ENCODE measurements at regions of chr12 and their contacts with region 1.

Region 1: GRCh38 chr12:67222302-67222701 is 46.9 kb upstream of the CAND1 start:
- DNase-seq: peak; percentile 45
- H3K4me3 ChIP-seq: no peak overlapping the region
- H3K27ac ChIP-seq: no peak overlapping the region
- H3K4me1 ChIP-seq: no peaks in the 10 kb centered on the region
- H3K27me3 ChIP-seq: peaks cover 2% of the 10 kb centered on the region
- CTCF ChIP-seq: peak; percentile 60 to 69

Region 2: GRCh38 chr12:66901138-66901932 is 321.0 kb before region 1 on chr12:
- CTCF ChIA-PET with region 1: no interaction called
- dilution Hi-C with region 1: no loop called
- in situ Hi-C with region 1: loop called (anchors 10 to 25 kb)
- intact Hi-C with region 1: loop called (anchors 2 kb)
- DNase-seq: peak; percentile 24
- H3K4me3 ChIP-seq: no peak overlapping the region
- H3K27ac ChIP-seq: no peak overlapping the region
- H3K4me1 ChIP-seq: peaks cover 8% of the 10 kb centered on the region
- H3K27me3 ChIP-seq: no peaks in the 10 kb centered on the region
- CTCF ChIP-seq: no peak

Region 3: GRCh38 chr12:67025543-67026114 is 196.7 kb before region 1 on chr12:
- CTCF ChIA-PET with region 1: interaction called, 4 read pairs
- dilution Hi-C with region 1: no loop called
- in situ Hi-C with region 1: loop called in 1 of 2 experiments (anchors 10 kb)
- intact Hi-C with region 1: loop called (anchors 1 kb)
- DNase-seq: peak; percentile 28
- H3K4me3 ChIP-seq: no peak overlapping the region
- H3K27ac ChIP-seq: no peak overlapping the region
- H3K4me1 ChIP-seq: no peaks in the 10 kb centered on the region
- H3K27me3 ChIP-seq: no peaks in the 10 kb centered on the region
- CTCF ChIP-seq: peak; percentile 77 to 84

Region 4: DNA sequence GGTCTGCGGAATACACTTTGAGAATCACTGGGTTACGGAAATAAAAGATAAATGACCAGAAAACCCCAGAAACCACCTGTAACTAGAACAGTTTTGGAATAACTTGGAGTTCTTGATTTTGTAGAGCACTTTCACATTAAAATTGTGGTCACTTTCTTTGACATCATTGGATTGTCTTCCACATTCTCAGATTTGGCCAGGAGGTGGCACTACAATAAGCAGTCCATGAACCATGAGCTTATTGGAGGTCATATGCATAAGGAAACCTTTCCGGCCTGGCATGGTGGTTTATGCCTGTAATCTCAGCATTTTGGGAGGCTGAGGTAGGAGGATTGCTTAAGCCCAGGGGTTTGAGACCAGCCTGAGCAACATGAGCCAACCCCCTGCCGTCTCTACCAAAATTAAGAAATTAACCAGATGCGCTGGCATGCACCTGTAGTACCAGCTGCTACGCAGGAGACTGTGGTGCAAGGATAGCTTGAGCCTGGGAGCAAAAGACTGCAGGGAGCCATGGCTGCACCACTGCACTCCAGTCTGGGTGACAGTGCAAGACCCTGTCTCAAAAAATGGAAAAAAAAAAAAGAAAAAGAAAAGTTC is 60.9 kb before region 1 on chr12:
- CTCF ChIA-PET with region 1: interaction called, 4 read pairs
- dilution Hi-C with region 1: no loop called
- in situ Hi-C with region 1: no loop called
- intact Hi-C with region 1: loop called (anchors 5 kb)
- DNase-seq: peak; percentile 38
- H3K4me3 ChIP-seq: no peak overlapping the region
- H3K27ac ChIP-seq: no peak overlapping the region
- H3K4me1 ChIP-seq: peaks cover under 1% of the 10 kb centered on the region
- H3K27me3 ChIP-seq: no peaks in the 10 kb centered on the region
- CTCF ChIP-seq: peak; percentile 68

Region 5: GRCh38 chr12:67275380-67275925 is 53.2 kb after region 1 on chr12:
- CTCF ChIA-PET with region 1: no interaction called
- dilution Hi-C with region 1: no loop called
- in situ Hi-C with region 1: no loop called
- intact Hi-C with region 1: no loop called
- DNase-seq: peak; percentile 50
- H3K4me3 ChIP-seq: no peak overlapping the region
- H3K27ac ChIP-seq: no peak overlapping the region
- H3K4me1 ChIP-seq: peaks cover 27% of the 10 kb centered on the region
- H3K27me3 ChIP-seq: no peaks in the 10 kb centered on the region
- CTCF ChIP-seq: no peak